Ovary (tissue), 10 donors: ENCODE measurements at regions of chr1 and their contacts with region 1.

Region 1: DNA sequence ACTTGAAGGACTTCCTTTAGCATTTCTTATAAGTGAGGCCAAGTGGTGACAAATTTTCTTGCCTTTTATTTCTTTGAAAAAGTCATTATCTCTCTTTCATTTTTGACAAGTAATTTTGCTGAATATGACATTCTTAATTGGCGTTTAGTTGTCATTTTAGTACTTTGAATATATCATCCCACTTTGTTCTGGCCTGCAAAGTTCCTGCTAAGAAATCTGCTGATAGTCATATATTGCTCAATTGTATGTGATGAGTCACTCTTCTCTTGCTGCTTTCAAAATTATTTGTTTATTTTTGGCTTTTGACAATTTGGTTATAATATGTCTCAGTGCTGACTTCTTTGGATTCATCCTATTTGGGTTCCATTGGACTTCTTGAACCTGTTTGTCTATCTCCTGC is 312.6 kb downstream of the DUSP10 start:
- DNase-seq: no peak
- H3K4me3 ChIP-seq: no peak overlapping the region
- H3K27ac ChIP-seq: no peak overlapping the region
- H3K4me1 ChIP-seq: no peaks in the 10 kb centered on the region
- H3K27me3 ChIP-seq: no peaks in the 10 kb centered on the region
- CTCF ChIP-seq: no peak
- EP300 ChIP-seq: no peak
- POLR2A ChIP-seq: no peak

Region 2: GRCh38 chr1:221664253-221664652 is 235.0 kb after region 1 on chr1:
- intact Hi-C with region 1: no loop called
- DNase-seq: no peak
- H3K4me3 ChIP-seq: no peak overlapping the region
- H3K27ac ChIP-seq: no peak overlapping the region
- H3K4me1 ChIP-seq: no peaks in the 10 kb centered on the region
- H3K27me3 ChIP-seq: no peaks in the 10 kb centered on the region
- CTCF ChIP-seq: no peak
- EP300 ChIP-seq: no peak
- POLR2A ChIP-seq: no peak

Region 3: GRCh38 chr1:222643938-222644635 is 1214.8 kb after region 1 on chr1:
- intact Hi-C with region 1: no loop called
- DNase-seq: peak; percentile 94 to 97 (median 95)
- H3K4me3 ChIP-seq: peak overlapping the region; percentile 87
- H3K27ac ChIP-seq: peak overlapping the region; percentile 58 to 64
- H3K4me1 ChIP-seq: peaks cover 6% of the 10 kb centered on the region
- H3K27me3 ChIP-seq: no peaks in the 10 kb centered on the region
- CTCF ChIP-seq: no peak
- EP300 ChIP-seq: no peak
- POLR2A ChIP-seq: peak; percentile 34

Region 4: GRCh38 chr1:222861062-222861461 is 1431.8 kb after region 1 on chr1:
- intact Hi-C with region 1: loop called in 1 of 4 experiments (anchors 5 kb)
- DNase-seq: no peak
- H3K4me3 ChIP-seq: no peak overlapping the region
- H3K27ac ChIP-seq: no peak overlapping the region
- H3K4me1 ChIP-seq: no peaks in the 10 kb centered on the region
- H3K27me3 ChIP-seq: no peaks in the 10 kb centered on the region
- CTCF ChIP-seq: no peak
- EP300 ChIP-seq: no peak
- POLR2A ChIP-seq: no peak